Cardiac septum (tissue), 1 donor: ENCODE measurements at regions of chr9 and their contacts with region 1.

Region 1: DNA sequence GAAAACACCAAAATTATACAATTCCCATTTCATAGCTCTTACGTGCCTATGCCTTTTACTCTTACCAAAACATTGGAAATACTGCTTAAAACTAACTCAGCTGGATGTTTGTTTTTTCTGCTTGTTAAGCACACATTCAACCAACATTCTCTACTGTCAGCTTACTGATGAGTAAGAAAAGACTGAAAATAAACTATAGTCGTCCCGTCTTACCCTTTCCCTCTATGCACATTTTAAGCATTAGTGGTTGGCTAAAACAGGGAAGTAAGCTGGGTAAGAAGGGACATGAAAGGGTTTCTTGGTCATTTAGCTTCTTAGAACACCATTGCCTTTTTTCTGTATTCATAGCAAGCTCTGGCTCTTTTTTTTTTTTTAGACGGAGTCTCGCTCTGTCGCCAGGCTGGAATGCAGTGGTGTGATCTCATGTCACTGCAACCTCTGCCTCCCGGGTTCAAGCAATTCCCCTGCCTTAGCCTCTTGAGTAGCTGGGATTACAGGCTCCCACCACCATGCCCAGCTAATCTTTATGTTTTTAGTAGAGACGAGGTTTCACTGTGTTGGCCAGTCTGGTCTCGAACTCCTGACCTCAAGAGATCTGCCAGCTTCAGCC is 232.1 kb upstream of the PCSK5 start:
- DNase-seq: no peak

Region 2: DNA sequence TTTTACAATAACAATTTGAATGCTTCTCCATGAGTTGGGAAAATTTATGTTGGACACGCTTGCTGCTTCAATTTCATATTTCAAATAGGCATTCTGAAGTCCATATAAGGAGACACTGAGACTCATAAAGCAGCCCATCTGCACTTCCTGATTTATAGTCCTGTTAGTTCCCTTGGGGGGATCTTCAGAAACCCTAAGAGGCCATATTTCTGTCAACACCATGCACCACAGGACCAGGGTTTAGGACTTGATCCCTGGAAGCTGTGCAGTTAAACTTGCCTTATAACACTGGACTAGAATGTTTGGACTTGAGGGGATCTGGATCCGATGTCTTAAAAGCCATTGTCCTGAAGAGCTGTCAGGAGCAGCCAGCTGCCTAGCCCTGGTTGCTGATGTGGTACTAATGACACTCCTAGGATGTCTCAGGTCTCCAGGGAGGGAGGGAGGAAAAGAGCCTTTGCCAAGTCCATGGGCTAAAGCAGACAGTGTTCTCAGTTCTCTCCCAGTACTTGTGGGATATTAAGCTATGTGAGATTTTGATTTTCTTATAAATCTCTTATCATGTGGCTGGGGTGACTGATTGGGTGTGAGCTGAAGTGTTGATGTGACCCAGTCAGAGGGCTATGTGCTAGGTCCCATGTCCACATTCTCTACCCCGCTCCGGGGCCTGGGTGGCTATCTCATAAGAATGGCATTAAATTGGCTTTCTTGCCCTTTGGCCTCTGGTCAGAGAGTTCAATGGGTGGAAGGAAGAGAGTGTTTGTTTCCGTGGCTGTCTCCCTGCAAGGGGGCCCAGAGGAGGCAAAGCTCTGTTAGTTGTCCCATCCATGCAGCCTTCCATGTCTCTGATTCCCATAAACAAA is 170.3 kb before region 1 on chr9:
- intact Hi-C with region 1: no loop called
- DNase-seq: no peak

Region 3: DNA sequence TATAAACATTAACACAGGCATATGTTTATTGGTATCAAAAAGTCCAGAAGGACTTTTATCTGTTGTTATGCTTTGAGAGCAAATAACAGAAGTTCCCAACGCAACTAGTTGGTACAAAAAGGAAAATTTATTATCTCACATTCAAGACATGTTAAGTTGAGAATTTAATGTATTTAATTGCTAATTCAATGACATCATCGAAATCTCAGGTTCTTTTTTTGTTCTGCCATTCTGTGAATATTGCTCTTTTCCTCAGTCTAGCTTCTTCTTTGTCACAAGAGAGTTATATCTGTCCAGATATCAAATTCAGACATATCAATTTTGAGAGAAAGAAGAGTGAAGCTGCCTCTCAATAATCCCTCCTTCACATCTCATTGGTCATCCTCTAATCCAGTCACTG is 75.5 kb before region 1 on chr9:
- intact Hi-C with region 1: no loop called
- DNase-seq: no peak

Region 4: DNA sequence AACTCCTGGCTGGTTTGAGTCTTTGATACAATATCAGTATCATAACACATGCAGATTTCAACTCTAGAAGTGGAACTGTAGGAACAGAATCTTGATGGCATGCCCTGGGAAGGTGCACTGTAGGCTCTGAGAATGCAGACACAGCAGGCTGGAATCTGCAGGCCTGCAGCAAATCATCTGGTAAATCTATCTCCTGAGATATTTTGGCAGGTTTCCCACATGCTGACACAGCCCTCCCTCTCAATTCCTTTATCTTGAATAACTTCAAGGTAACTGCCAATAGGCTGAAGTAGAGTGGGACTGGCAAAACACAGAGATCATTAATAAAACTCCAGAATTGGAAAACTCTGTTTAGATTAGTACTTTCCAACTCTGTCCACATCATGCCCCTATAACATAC is 54.3 kb after region 1 on chr9:
- intact Hi-C with region 1: loop called (anchors 10 kb)
- DNase-seq: no peak